HEK293 (cell line): ENCODE measurements at regions of chr12 and their contacts with region 1.

Region 1: DNA sequence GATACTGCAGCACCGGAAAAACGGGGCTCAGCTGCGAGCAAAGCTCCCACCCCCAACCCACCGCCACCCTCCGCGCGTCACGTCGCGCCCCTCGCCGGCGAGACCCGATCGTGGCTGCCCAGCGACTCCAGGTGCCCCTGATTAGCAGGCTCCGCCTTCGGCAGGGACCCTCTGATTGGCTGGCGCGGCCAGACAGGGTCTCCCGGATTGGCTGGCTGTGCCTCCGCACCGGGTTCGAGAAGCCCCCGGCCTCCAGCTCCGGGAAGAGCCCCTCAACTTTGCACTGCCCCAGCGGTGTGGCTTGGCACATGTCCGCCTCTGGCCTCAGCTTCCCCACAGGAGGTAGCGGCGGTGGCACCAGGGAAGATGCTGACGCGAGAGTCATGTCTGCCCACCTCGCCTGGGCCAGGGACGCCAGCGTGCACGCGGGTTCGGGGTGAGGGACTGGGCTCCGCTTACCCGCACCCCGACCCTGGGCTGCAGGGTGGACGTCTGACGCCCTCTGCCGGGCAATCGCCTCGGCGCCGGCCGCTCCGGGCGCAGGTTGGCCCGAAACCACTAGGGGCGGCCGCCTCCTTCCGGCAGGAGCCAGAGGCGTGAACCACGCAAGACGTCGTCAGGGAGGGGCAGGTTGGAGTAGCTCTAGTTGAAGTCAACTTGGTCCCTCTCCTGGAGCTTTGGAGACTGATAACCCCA is 498 bp upstream of the RHOF start:
- H3K4me3 ChIP-seq: peak overlapping the region; percentile 50
- H3K27ac ChIP-seq: peak overlapping the region; percentile 0; the same call in 1 of the 2 replicates
- H3K4me1 ChIP-seq: peaks cover 17% of the 10 kb centered on the region
- CTCF ChIP-seq: peak; percentile 100

Region 2: GRCh38 chr12:121712461-121713256 is 81.3 kb before region 1 on chr12 and contains the start of gene TMEM120B:
- CTCF ChIA-PET with region 1: interaction called, 11 read pairs
- POLR2A ChIA-PET with region 1: interaction called, 4 read pairs
- H3K4me3 ChIP-seq: peak within 1 kb of the TSS; percentile 75
- H3K27ac ChIP-seq: peak within 1 kb of the TSS; percentile 67; the same call in 1 of the 2 replicates
- H3K4me1 ChIP-seq: no peaks in the 10 kb centered on the region
- CTCF ChIP-seq: peak; percentile 85

Region 3: DNA sequence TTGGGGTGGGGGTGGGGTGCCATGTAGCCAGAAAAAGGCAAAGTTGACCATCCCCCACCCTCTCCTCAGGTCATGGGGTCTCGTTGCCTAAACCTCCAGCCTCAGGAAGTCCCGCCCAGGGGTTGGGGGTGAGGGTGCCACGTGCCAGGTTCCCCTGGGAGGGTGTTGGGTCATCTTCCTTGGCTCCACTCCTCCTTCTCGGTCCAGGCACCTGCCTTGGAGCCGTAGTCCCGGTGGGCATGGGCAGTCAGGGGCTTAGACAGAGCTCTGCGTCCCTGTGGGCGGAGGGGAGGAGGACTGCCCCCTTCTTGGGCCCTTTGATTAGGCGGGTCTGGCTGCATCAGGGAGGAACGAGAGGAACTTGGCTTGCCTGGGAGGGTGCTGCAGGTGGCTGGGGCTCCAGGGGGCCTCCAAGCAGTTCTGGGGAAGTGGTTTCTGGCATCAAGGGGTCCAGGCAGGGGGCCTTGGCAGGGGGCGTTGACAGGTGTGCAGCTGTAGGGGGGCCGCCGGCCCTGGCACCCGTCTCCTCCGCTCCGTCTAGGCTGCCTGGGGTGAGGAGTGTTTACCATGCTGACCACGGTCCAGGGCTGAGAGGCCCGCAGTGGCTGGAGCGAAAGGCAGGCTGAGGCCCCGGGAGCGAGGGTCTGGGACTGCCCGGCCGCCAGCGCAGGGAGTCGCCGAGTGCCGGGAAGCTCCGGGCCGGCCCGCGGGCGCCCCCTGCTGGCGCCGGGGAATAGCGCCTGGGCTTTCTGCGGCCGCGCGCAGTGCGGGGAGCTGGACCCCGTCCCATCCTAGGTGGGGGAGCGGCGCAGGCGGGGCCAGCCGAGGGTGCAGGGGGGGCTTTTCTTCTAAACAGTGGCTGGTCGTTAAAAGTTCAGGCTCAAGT is 17.7 kb after region 1 on chr12:
- CTCF ChIA-PET with region 1: interaction called, 393 read pairs
- POLR2A ChIA-PET with region 1: interaction called, 165 read pairs
- H3K4me3 ChIP-seq: peak overlapping the region; percentile 33
- H3K27ac ChIP-seq: peak overlapping the region; percentile 34; the same call in 1 of the 2 replicates
- H3K4me1 ChIP-seq: peaks cover 5% of the 10 kb centered on the region; the same call in 1 of the 2 replicates
- CTCF ChIP-seq: peak; percentile 55

Region 4: GRCh38 chr12:121858662-121859572 is 64.9 kb after region 1 on chr12 and contains the start of gene HPD:
- CTCF ChIA-PET with region 1: interaction called, 22 read pairs
- POLR2A ChIA-PET with region 1: no interaction called
- H3K4me3 ChIP-seq: no peak within 1 kb of the TSS
- H3K27ac ChIP-seq: no peak within 1 kb of the TSS
- H3K4me1 ChIP-seq: peaks cover 8% of the 10 kb centered on the region; the same call in 1 of the 2 replicates
- CTCF ChIP-seq: no peak

Region 5: GRCh38 chr12:121908702-121909101 is 114.7 kb after region 1 on chr12:
- CTCF ChIA-PET with region 1: interaction called, 11 read pairs
- POLR2A ChIA-PET with region 1: no interaction called
- H3K4me3 ChIP-seq: no peak overlapping the region
- H3K27ac ChIP-seq: no peak overlapping the region
- H3K4me1 ChIP-seq: no peaks in the 10 kb centered on the region
- CTCF ChIP-seq: no peak